CD8-positive, alpha-beta T cell (primary cell): ENCODE measurements at regions of chr1 and their contacts with region 1.

Region 1: DNA sequence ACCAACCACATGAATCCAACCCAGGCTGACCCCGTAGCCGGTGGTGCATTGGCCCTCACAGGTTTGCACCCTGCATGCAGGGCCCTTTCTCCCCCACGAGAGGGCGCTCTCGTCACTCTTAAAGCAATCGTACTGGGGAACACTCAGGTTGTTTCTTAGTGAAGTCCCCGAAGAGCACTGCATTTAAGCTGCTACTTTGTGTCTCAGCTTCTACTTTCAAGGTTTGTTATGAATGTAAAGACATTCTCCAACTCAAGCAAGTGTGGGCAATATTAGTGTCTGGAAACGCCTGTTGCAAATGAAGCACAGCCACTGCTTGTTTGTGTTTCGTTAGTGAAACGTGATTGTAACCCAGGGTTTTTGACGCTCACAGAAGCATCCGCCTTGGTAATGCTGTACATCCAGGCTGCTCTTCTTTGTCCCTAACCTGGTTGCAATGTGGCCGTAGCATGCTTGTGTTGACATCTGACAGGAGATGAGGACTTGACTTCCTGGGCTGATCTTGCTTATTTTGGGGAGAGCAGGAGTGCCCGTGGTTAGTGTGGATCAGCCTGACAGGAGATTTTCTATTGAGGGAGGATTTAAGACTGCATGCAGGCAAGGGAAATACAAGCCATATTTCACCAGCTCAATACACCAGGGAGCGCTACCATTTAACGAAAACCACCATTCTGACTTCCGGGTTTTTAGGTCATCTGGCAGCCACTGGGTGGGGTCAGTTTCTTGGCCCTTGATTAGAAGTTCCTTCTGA is 79.8 kb downstream of the ST6GALNAC3 start:
- DNase-seq: peak; percentile 53 to 90 (median 78)
- ATAC-seq: peak; percentile 91
- H3K4me3 ChIP-seq: peak overlapping the region; percentile 52 to 58
- H3K4me3 Mint-ChIP-seq: peak overlapping the region; percentile 89
- H3K27ac ChIP-seq: peak overlapping the region; percentile 31 to 56
- H3K27ac Mint-ChIP-seq: peak overlapping the region; percentile 86
- H3K4me1 ChIP-seq: peaks cover 6% of the 10 kb centered on the region
- H3K4me1 Mint-ChIP-seq: peaks cover 8% of the 10 kb centered on the region
- H3K27me3 ChIP-seq: no peaks in the 10 kb centered on the region
- H3K27me3 Mint-ChIP-seq: peaks cover 4% of the 10 kb centered on the region
- CTCF ChIP-seq: peak; percentile 90

Region 2: DNA sequence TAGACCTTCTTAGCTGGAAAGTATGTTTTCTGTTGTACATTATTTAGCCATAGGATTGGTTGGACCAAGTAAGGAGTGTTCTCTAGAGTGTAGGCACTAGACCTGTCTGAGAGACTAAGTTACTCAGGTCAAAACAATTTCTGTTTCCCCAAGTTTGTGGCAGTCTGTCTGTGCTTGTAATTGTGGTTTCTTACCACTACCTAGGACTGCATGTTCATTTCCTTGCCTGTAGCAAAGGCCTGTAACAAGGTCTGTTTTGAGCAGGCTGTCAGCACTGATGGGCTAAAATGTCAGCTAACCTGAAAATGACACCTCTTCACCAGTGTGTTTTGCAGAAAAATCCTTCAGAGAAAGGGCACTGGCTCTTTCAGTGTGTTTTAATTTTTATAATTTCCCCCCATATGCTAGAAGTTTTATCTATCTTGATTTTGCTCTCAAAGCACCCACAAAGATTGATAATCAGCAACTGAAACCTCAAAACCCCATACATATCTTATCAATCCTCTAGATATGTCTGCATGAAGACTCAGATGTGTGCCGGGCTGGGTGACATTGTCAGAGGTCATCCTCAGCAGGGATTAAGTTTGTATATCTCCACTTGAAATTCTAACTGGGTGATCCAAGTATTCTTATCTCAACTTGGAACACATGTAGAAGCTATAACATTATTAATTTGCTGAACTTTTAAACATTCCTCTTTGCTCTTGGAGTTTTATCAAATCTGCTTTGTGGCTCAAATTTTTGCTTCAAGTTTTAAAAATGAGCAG is 130.5 kb before region 1 on chr1:
- CTCF ChIA-PET with region 1: no interaction called
- POLR2A ChIA-PET with region 1: no interaction called
- intact Hi-C with region 1: no loop called
- DNase-seq: peak in 3 of 9 experiments; percentile 11 to 48 (median 27)
- ATAC-seq: peak; percentile 71
- H3K4me3 ChIP-seq: no peak overlapping the region
- H3K4me3 Mint-ChIP-seq: no peak overlapping the region
- H3K27ac ChIP-seq: peak overlapping the region; percentile 3 to 12
- H3K27ac Mint-ChIP-seq: peak overlapping the region; percentile 87
- H3K4me1 ChIP-seq: peaks cover 22% of the 10 kb centered on the region
- H3K4me1 Mint-ChIP-seq: peaks cover 20% of the 10 kb centered on the region
- H3K27me3 ChIP-seq: no peaks in the 10 kb centered on the region
- H3K27me3 Mint-ChIP-seq: no peaks in the 10 kb centered on the region
- CTCF ChIP-seq: no peak

Region 3: DNA sequence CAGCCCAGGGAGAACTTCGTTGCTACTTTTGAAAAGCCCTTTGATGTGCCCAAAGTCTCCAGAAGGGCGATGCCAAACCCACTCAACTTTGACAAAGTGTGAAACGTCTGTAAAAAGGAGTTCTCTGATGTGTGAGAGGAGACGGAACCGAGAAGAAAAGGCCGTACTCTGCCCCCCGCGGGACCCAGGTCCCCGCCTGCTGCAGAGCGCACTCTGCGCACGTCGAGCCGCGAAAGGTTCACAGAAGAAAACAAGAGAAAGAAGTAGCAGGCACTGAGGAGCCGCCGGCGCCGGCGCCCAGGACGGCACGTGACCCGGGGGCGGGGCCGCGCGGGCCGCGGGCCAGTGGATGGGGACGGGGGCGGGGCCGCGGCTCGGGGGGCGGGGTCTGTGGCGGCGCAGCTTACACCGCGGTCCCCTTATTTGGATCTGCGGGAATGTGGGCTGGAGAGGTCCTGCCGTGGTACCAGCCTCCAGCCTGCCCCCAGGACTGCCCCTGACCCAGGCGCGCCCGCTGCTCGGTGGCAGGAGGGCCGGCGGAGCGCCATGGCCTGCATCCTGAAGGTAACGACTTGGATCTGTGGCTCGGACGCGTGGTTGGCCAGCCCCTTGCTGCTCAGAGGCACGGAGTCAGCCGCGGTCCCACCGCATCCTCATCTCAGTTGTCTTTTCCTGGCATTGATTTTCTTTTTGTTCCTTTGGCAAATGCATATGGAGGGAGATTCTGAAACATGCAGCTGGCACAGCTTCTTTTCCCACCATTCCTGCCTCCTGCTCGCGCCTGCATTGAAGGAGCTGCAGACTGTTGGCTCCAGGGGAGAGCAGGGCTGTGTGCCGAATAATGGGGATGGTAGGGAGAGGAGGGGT is 79.8 kb before region 1 on chr1 and contains the start of gene ST6GALNAC3:
- CTCF ChIA-PET with region 1: no interaction called
- POLR2A ChIA-PET with region 1: no interaction called
- intact Hi-C with region 1: loop called in 1 of 2 experiments (anchors 5 kb)
- DNase-seq: peak; percentile 54 to 86 (median 77)
- ATAC-seq: peak; percentile 95
- H3K4me3 ChIP-seq: peak within 1 kb of the TSS; percentile 74 to 79
- H3K4me3 Mint-ChIP-seq: peak within 1 kb of the TSS; percentile 87
- H3K27ac ChIP-seq: peak within 1 kb of the TSS; percentile 34 to 56
- H3K27ac Mint-ChIP-seq: peak within 1 kb of the TSS; percentile 83
- H3K4me1 ChIP-seq: peaks cover 15% of the 10 kb centered on the region
- H3K4me1 Mint-ChIP-seq: peaks cover 29% of the 10 kb centered on the region
- H3K27me3 ChIP-seq: no peaks in the 10 kb centered on the region
- H3K27me3 Mint-ChIP-seq: peaks cover 5% of the 10 kb centered on the region
- CTCF ChIP-seq: no peak
- total RNA-seq, gene ST6GALNAC3: 1.4 to 2.3 TPM

Region 4: GRCh38 chr1:76170513-76170912 is 16.1 kb after region 1 on chr1:
- CTCF ChIA-PET with region 1: interaction called, 18 read pairs
- POLR2A ChIA-PET with region 1: no interaction called
- intact Hi-C with region 1: no loop called
- DNase-seq: peak in 1 of 9 experiments; percentile 37
- ATAC-seq: no peak
- H3K4me3 ChIP-seq: no peak overlapping the region
- H3K4me3 Mint-ChIP-seq: peak overlapping the region; percentile 29
- H3K27ac ChIP-seq: peak overlapping the region in 1 of 2 experiments; percentile 14
- H3K27ac Mint-ChIP-seq: peak overlapping the region; percentile 42
- H3K4me1 ChIP-seq: peaks cover 8% of the 10 kb centered on the region
- H3K4me1 Mint-ChIP-seq: peaks cover 11% of the 10 kb centered on the region
- H3K27me3 ChIP-seq: no peaks in the 10 kb centered on the region
- H3K27me3 Mint-ChIP-seq: no peaks in the 10 kb centered on the region
- CTCF ChIP-seq: no peak

Region 5: DNA sequence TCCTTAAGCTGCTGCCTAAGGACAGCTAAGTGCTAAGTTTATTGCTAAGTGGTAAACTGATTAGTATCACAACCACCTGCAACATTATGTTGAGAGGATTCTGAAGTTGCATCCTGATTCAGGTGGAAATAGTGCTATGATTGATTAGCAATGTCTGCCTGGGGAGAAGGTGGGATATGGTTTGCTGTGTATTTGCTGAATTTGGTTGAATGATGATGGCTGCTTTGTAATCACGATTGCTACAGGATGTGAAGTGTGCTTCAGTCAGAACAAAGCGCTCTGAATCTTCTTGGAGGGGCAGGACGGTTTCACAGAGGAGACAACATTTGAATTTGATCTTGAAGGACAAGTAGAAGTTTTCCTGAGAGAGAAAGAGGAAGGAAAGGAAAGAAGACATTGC is 146.2 kb after region 1 on chr1:
- CTCF ChIA-PET with region 1: interaction called, 11 read pairs
- POLR2A ChIA-PET with region 1: no interaction called
- intact Hi-C with region 1: no loop called
- DNase-seq: peak in 1 of 9 experiments; percentile 33
- ATAC-seq: peak; percentile 29
- H3K4me3 ChIP-seq: no peak overlapping the region
- H3K4me3 Mint-ChIP-seq: no peak overlapping the region
- H3K27ac ChIP-seq: no peak overlapping the region
- H3K27ac Mint-ChIP-seq: peak overlapping the region; percentile 37
- H3K4me1 ChIP-seq: peaks cover 8% of the 10 kb centered on the region
- H3K4me1 Mint-ChIP-seq: peaks cover 16% of the 10 kb centered on the region
- H3K27me3 ChIP-seq: no peaks in the 10 kb centered on the region
- H3K27me3 Mint-ChIP-seq: no peaks in the 10 kb centered on the region
- CTCF ChIP-seq: no peak

Region 6: GRCh38 chr1:77126307-77126706 is 971.9 kb after region 1 on chr1:
- CTCF ChIA-PET with region 1: interaction called, 5 read pairs
- POLR2A ChIA-PET with region 1: no interaction called
- intact Hi-C with region 1: loop called (anchors 1 kb)
- DNase-seq: peak in 3 of 9 experiments; percentile 25 to 62 (median 42)
- ATAC-seq: no peak
- H3K4me3 ChIP-seq: no peak overlapping the region
- H3K4me3 Mint-ChIP-seq: no peak overlapping the region
- H3K27ac ChIP-seq: no peak overlapping the region
- H3K27ac Mint-ChIP-seq: no peak overlapping the region
- H3K4me1 ChIP-seq: no peaks in the 10 kb centered on the region
- H3K4me1 Mint-ChIP-seq: no peaks in the 10 kb centered on the region
- H3K27me3 ChIP-seq: no peaks in the 10 kb centered on the region
- H3K27me3 Mint-ChIP-seq: no peaks in the 10 kb centered on the region
- CTCF ChIP-seq: peak; percentile 25

Region 7: DNA sequence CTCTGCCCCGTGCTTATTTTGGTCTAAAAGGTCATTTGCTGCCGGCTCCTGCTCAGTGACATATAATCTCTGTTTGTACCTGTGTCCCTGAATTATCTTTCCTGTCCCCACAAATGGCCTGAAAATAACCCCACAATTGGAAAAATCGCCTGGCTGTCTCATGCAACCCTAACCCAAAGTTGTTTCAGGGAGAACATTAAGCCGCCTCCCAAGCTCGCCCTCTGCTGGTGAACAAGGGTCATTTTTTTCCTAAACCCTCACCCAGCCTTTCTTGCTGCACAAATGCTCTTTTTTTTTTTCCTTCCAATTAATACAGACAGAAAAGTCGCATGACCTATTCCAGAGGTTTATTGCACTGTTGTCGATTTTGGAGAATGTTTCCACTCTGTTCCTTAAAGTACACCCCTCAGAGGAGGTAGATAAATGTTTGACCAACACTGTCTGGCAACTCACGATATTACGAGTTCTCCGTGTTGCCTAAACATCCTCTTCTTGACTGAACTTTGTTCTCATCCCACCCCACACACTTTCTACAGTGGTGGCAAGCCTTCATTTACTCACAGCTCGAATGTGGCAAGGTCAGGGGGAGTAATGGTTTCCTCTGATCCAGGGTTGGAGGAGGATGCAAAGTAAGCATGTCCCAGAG is 1379.4 kb after region 1 on chr1:
- CTCF ChIA-PET with region 1: interaction called, 8 read pairs
- POLR2A ChIA-PET with region 1: no interaction called
- intact Hi-C with region 1: loop called (anchors 1 to 2 kb)
- DNase-seq: peak; percentile 26 to 77 (median 61)
- ATAC-seq: peak; percentile 62
- H3K4me3 ChIP-seq: no peak overlapping the region
- H3K4me3 Mint-ChIP-seq: peak overlapping the region; percentile 38
- H3K27ac ChIP-seq: no peak overlapping the region
- H3K27ac Mint-ChIP-seq: peak overlapping the region; percentile 21
- H3K4me1 ChIP-seq: peaks cover 9% of the 10 kb centered on the region
- H3K4me1 Mint-ChIP-seq: peaks cover 7% of the 10 kb centered on the region
- H3K27me3 ChIP-seq: no peaks in the 10 kb centered on the region
- H3K27me3 Mint-ChIP-seq: no peaks in the 10 kb centered on the region
- CTCF ChIP-seq: peak; percentile 91

Region 8: DNA sequence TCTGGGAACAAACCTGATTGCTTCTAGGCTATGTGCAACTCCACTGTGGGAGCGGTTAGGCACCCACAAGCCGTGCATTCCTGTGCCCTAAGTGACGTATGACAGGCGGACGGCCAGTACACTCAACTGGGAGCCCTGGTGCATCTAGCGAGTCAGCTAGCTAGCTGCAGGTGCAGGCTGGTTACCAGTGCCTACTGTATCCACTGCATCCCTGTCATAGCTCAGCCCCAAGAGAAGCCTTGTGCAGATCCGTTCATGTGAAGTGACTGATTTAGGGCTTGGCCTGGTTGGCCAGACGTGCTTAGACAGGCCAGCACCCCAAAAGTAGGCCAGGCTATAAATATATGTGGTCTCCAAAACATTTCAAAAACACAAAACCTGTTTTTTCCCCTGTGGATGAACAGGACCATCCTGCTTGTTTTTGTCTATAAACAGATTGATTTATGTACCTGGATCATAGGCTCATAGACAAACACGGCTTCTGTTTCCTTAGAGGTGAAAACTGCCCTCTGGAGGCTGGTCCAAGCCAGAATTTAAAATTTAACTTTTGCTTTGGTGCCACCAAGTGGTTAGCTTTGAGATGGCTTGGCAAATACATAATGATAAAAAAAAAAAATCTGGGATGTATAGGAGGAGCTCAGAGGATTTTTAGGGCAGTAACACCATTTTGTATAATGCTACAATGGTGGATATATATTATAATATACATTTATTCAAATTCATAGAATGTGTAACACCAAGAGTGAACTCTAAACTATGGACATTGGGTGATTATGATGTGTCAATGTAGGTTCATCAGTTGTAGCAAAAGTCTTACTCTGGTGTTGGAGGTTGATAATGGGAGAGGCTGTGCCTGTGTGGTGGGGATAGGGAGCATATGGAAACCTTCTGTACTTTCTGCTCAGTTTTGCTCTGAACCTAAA is 1959.9 kb after region 1 on chr1:
- CTCF ChIA-PET with region 1: interaction called, 3 read pairs
- POLR2A ChIA-PET with region 1: no interaction called
- intact Hi-C with region 1: loop called (anchors 1 to 2 kb)
- DNase-seq: peak; percentile 21 to 78 (median 52)
- ATAC-seq: peak; percentile 97
- H3K4me3 ChIP-seq: no peak overlapping the region
- H3K4me3 Mint-ChIP-seq: no peak overlapping the region
- H3K27ac ChIP-seq: no peak overlapping the region
- H3K27ac Mint-ChIP-seq: no peak overlapping the region
- H3K4me1 ChIP-seq: no peaks in the 10 kb centered on the region
- H3K4me1 Mint-ChIP-seq: no peaks in the 10 kb centered on the region
- H3K27me3 ChIP-seq: no peaks in the 10 kb centered on the region
- H3K27me3 Mint-ChIP-seq: no peaks in the 10 kb centered on the region
- CTCF ChIP-seq: peak; percentile 99